PC-9 (cell line): ENCODE measurements at regions of chr3 and their contacts with region 1.

Region 1: GRCh38 chr3:168865022-168865551 is 769.4 kb upstream of the GOLIM4 start:
- DNase-seq: peak in 1 of 2 experiments; percentile 23
- H3K4me3 ChIP-seq: no peak overlapping the region
- H3K27ac ChIP-seq: no peak overlapping the region
- H3K4me1 ChIP-seq: no peaks in the 10 kb centered on the region; the same call in 1 of the 2 replicates
- H3K27me3 ChIP-seq: no peaks in the 10 kb centered on the region
- CTCF ChIP-seq: peak; percentile 94

Region 2: GRCh38 chr3:168889666-168890065 is 24.6 kb after region 1 on chr3:
- CTCF ChIA-PET with region 1: interaction called, 7 read pairs
- POLR2A ChIA-PET with region 1: no interaction called
- intact Hi-C with region 1: loop called (anchors 2 kb)
- DNase-seq: peak in 1 of 2 experiments; percentile 45
- H3K4me3 ChIP-seq: no peak overlapping the region
- H3K27ac ChIP-seq: no peak overlapping the region
- H3K4me1 ChIP-seq: peaks cover 1% of the 10 kb centered on the region
- H3K27me3 ChIP-seq: no peaks in the 10 kb centered on the region
- CTCF ChIP-seq: peak; percentile 42; the same call in 1 of the 2 replicates

Region 3: DNA sequence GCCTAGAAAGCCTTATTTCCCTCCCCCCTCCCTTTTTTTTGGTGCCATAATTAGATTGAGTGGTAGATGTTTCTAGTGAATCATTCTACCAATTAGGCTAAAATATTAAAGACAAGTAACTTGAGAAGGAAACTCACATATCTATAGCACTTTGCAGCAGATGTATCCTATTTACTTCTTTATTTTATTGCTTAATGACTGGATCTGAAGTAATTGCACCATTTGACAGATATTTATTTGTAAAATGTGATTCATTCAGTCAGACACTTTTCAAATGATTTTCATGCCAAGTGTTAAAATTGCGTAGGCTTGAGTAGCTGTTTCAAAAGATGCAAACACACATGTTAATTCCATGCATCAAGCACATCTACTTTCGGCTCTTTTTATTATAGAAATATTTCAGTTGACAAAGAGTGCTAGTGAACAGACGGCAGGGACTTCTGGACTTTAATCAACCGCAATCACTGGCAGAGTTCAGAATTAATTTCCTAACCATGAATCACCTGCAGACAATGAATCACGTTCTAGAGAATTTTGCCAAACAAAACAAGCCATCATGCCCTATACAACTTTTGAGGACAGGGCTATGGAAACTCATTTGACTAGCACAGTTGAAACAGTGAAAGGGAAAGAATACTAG is 161.6 kb after region 1 on chr3:
- CTCF ChIA-PET with region 1: no interaction called
- POLR2A ChIA-PET with region 1: interaction called, 4 read pairs
- intact Hi-C with region 1: loop called (anchors 5 kb)
- DNase-seq: peak; percentile 41 to 87
- H3K4me3 ChIP-seq: peak overlapping the region; percentile 14; the same call in 1 of the 2 replicates
- H3K27ac ChIP-seq: peak overlapping the region; percentile 25
- H3K4me1 ChIP-seq: peaks cover 33% of the 10 kb centered on the region
- H3K27me3 ChIP-seq: no peaks in the 10 kb centered on the region
- CTCF ChIP-seq: no peak

Region 4: DNA sequence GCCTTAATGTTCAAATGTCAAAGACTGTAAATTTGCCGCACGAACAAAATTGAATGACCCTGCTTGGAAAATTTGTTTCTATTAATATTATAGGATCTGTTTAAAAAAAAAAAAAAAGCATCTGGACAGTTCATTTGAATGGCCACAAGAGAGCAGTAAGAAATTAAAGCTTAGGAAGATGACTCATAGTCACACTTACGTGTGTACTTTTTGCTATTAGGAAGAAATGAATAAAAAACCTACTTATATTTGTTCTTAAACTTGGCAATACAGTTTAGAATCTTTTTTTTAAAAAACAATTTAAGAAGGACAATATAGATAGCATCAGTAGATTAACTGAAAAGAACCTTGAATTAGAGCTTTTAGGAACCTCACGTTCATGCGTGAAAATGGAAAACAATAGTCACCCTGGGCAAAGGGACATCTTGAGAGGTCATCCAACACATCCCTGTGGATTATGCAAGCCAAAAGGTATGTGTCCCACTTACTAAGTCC is 176.6 kb after region 1 on chr3:
- CTCF ChIA-PET with region 1: interaction called, 3 read pairs
- POLR2A ChIA-PET with region 1: interaction called, 6 read pairs
- intact Hi-C with region 1: loop called (anchors 1 kb)
- DNase-seq: peak in 1 of 2 experiments; percentile 66
- H3K4me3 ChIP-seq: no peak overlapping the region
- H3K27ac ChIP-seq: no peak overlapping the region
- H3K4me1 ChIP-seq: peaks cover 25% of the 10 kb centered on the region
- H3K27me3 ChIP-seq: no peaks in the 10 kb centered on the region
- CTCF ChIP-seq: peak; percentile 78

Region 5: DNA sequence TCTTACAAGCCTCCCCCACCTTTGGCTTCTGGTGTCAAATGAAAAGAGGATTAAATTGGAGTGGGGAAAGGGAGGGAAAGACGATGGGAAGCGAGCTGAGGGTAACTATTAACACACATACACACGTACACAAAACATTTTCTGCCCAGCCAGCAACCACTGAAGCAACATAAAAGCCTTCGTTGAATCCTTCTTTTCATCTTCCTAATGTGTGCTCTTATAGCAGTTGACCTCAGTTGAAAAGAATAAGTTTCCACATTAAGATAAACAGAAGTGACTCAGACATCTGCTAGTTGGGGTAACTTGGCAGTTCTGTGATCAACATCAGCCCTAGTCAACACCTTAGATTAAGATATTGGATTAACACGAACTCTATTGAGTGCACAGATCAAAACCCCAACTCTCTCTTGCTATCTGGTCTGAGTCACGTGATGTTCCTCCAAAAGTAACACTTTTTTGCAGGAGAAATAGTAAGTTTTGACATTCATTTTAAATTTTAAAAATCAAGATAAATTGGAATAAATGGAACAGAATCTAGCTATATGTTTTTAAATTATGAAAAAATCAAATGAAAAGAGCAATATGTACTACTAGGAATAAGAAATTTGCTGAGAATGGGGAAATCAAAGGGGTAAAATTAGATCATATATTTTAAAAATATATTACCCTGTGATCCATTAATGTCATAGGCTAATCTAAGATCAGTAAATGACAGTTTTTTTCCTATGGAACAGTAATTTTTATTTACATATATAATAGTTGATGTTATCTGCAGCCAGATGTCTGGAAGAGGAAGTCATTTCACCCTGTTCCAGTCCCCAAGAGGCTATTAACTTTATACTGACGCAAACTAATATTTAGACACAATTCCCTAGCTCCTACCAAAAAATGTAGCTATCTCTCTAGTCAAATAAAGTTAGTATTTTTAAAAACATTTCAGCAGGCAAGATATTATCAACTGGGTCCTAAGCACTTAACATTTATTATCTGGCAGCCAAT is 240.2 kb after region 1 on chr3:
- CTCF ChIA-PET with region 1: no interaction called
- POLR2A ChIA-PET with region 1: no interaction called
- intact Hi-C with region 1: loop called (anchors 5 kb)
- DNase-seq: no peak
- H3K4me3 ChIP-seq: no peak overlapping the region
- H3K27ac ChIP-seq: no peak overlapping the region
- H3K4me1 ChIP-seq: no peaks in the 10 kb centered on the region
- H3K27me3 ChIP-seq: no peaks in the 10 kb centered on the region
- CTCF ChIP-seq: no peak

Region 6: DNA sequence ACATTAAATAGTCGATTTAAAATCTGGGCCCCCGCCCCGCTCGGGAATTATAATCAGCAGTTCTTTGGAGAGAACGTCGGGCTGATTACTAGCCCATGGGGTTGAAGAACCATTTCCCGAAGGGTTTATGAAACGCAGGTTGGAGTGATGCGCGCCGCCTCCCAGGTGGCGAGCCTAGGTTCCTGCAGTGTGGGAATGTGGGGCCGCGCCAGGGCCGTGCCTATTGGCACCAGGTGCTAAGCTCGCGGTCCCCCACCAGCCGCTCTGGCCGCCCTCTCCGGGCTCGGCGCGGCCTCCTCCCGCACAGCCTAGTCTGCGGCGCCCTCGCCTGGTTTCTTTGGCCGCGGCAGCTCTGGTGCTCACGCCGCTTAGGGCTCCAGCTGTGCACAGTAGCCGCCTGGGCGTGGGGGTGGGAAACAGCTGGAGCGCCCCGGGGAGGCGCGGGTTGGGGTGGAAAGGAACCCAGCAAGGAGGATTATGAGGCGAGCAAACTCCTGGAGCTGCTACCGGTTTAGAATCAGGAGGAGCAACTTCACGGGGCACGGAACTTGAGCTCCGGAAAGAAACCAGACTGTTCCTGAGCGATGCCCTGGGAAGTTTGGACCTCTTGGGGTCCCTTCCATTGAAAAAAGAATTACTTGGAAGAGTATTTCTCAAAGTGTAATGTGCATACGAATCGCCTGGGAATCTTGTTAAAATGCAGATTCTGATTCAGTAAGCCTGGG is 804.0 kb after region 1 on chr3:
- CTCF ChIA-PET with region 1: interaction called, 12 read pairs
- POLR2A ChIA-PET with region 1: no interaction called
- intact Hi-C with region 1: loop called (anchors 1 kb)
- DNase-seq: peak; percentile 78 to 88
- H3K4me3 ChIP-seq: peak overlapping the region; percentile 61
- H3K27ac ChIP-seq: no peak overlapping the region
- H3K4me1 ChIP-seq: peaks cover 18% of the 10 kb centered on the region; the same call in 1 of the 2 replicates
- H3K27me3 ChIP-seq: peaks cover 4% of the 10 kb centered on the region; the same call in 1 of the 2 replicates
- CTCF ChIP-seq: peak; percentile 91